ENCODE measurements at regions of chr2 and their contacts with region 1.

Region 1: DNA sequence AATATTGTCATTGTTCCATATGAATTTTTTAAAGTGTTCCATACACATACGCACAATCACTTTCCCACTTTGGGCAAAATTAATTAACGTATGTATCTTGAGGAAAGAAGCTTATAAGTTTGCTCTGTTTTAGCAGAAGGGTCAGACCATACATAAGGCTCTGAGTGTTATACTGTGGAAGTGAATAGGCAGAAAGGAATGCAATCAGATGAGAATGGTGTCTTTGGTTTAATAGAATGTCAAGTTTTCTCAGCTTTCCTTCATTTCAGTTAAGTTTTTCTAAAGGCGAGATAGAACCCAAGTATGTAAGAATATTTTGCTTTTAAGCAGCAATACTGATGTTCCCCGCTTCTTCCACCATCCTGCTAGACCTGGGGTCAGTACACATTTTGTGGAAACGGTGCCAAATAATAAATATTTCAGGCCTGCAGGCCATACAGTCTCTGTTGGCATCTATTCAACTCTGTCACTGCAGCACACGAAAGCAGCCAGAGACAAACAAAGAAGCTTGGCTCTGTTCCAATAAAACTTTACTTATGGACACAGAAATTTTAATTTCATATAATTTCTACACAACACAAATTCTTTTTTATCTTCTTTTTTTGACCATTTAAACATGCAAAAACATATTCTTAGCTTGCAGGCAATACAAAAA is 100.6 kb downstream of the UPP2 start:
- DNase-seq: no peak
- CTCF ChIP-seq: no peak

Region 2: DNA sequence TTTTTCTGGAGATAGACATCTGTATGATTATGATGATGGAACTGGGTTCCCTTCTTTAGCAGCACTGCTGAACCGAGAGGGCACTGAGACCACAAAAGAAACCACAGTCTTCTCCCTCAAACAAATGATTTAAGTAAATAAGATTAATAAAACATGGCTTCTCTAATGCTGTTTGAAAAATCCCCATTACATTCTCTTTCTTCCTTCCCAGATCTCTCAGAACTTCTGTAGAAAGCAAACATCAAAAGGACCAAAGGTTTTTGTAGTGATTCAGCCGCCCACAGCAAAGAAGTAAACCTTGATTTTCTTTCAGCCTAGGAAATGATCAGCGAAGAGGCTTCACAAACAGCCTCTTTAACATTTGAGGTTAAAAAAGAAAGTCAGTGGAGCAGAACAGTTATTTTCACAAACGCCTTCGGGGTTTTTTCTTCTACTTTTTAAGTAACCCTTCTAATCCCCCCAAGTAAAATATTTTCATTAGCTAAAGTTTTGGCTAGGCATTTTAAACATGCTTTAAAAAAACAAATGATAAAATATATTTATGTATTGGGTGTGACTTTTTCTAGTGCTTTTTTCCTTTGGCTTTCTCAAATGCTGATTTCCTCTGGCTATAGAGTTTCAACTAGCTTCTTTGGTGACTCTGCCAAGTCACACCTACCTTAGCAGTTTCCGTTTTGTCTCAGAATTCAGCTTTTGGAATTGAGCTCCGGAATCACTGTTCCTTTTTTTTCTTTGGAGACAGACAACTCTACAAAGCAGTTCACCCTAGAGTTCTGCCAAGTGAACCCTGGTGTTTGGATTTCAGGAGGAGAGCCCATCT is 11.0 kb before region 1 on chr2:
- CTCF ChIA-PET with region 1: interaction called, 13 read pairs
- POLR2A ChIA-PET with region 1: no interaction called
- DNase-seq: peak; percentile 24
- CTCF ChIP-seq: no peak

Region 3: DNA sequence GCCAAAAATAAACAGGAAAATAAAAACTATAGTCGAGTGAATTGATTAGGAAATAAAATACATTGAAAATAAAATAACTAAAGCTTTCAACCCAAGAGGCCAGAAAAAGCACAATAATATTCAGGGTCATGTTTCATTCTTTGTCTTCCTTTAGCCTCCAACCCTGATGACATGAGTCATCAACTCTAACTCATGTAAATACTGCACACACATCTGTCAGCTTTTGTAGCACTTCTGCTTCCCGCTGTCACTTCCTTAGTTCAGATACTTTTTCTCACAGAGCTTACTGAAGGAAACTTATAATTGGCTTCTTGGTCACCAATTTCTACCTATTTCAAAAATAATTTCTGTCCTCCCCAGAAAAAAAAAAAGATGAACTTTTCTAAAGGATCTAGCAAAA is 12.2 kb after region 1 on chr2:
- CTCF ChIA-PET with region 1: interaction called, 14 read pairs
- POLR2A ChIA-PET with region 1: no interaction called
- DNase-seq: peak; percentile 29
- CTCF ChIP-seq: no peak

Measured in GM10248 (cell line).